H1 (cell line): ENCODE measurements at regions of chr17 and their contacts with region 1.

Region 1: GRCh38 chr17:46940621-46941404 is 17.9 kb downstream of the GOSR2 start:
- DNase-seq: peak; percentile 56 to 89
- H3K4me3 ChIP-seq: no peak overlapping the region
- H3K27ac ChIP-seq: no peak overlapping the region
- H3K4me1 ChIP-seq: peaks cover 6 to 16% (median 9%) of the 10 kb centered on the region in 4 experiments
- H3K27me3 ChIP-seq: no peaks in the 10 kb centered on the region
- CTCF ChIP-seq: peak; percentile 90 to 98 (median 90)
- EP300 ChIP-seq: no peak
- POLR2A ChIP-seq: no peak
- RAD21 ChIP-seq: peak; percentile 93 to 94

Region 2: DNA sequence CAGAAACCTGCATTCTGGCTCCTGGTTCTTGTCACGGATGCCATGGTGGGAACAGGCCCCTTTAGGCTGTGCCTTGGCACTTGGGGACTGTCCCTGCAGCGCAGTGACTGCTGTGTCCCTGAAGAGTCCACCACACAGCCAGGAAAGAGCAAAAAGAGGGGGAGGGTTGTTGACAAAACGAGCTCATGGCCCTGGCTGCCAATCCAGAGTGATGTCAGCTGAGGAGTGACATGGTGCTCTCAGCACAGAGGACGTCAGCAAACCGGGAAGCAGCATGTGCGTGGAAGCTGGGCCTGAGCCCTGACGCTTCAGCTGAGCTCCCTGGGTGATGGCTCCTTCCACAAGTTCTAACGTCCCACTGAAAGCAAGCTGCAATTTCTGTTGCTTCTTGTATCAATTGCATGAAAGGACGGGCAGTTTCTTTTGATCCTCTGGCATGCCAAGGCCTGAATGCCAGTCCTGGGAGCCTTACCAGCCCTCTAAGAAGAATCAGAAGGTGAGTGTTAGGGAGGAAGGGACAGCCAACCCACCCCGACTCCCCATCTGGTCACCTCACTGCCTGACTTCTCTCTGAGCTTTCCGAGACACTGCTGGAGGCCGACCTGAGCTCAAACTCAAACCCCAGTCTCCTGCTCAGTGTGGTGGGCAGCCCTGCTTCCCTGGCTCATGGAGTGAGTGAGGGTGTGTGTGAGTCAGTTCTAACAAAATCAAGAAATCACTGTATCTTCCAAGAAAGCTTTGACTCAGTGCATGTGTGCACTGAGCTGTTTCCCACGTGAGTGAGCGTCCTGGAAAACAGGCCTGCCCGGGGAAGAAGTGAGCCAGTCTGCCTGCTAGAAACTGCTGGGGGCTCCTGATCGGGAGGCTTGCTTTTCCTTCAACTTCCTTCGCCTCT is 107.6 kb before region 1 on chr17:
- CTCF ChIA-PET with region 1: interaction called, 52 read pairs
- POLR2A ChIA-PET with region 1: interaction called, 3 read pairs
- DNase-seq: no peak
- H3K4me3 ChIP-seq: no peak overlapping the region
- H3K27ac ChIP-seq: no peak overlapping the region
- H3K4me1 ChIP-seq: peaks cover 5 to 23% (median 17%) of the 10 kb centered on the region in 4 experiments
- H3K27me3 ChIP-seq: peaks cover 0 to 39% (median 16%) of the 10 kb centered on the region in 4 experiments; a peak in 5 of 7 replicates
- CTCF ChIP-seq: no peak
- EP300 ChIP-seq: no peak
- POLR2A ChIP-seq: no peak
- RAD21 ChIP-seq: no peak

Region 3: DNA sequence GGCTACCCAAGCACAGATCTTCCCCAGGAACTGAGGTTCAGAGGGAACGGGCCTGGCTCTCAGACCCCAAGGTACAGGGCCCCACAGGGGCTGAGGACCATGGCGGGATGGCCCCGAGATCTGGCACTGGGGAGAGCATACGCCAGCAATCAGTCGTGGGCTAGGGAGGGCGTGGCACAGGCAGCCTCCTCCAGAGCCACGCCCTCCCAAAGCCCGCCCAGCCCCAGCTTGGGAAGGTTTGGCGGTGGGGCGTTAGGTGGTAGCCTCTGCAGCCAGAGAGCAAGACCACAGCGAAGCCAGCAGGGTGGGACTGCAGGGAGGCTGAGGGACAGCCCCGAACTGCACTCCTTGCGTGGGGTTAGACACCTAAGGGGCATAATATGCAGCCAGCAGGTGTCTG is 77.9 kb before region 1 on chr17:
- CTCF ChIA-PET with region 1: interaction called, 21 read pairs
- POLR2A ChIA-PET with region 1: no interaction called
- DNase-seq: peak in 1 of 2 experiments; percentile 82
- H3K4me3 ChIP-seq: no peak overlapping the region
- H3K27ac ChIP-seq: no peak overlapping the region
- H3K4me1 ChIP-seq: peaks cover 0 to 8% (median 3%) of the 10 kb centered on the region in 4 experiments; a peak in 5 of 7 replicates
- H3K27me3 ChIP-seq: peaks cover 0 to 5% (median 0%) of the 10 kb centered on the region in 4 experiments; a peak in 2 of 7 replicates
- CTCF ChIP-seq: no peak
- EP300 ChIP-seq: no peak
- POLR2A ChIP-seq: no peak
- RAD21 ChIP-seq: no peak

Region 4: DNA sequence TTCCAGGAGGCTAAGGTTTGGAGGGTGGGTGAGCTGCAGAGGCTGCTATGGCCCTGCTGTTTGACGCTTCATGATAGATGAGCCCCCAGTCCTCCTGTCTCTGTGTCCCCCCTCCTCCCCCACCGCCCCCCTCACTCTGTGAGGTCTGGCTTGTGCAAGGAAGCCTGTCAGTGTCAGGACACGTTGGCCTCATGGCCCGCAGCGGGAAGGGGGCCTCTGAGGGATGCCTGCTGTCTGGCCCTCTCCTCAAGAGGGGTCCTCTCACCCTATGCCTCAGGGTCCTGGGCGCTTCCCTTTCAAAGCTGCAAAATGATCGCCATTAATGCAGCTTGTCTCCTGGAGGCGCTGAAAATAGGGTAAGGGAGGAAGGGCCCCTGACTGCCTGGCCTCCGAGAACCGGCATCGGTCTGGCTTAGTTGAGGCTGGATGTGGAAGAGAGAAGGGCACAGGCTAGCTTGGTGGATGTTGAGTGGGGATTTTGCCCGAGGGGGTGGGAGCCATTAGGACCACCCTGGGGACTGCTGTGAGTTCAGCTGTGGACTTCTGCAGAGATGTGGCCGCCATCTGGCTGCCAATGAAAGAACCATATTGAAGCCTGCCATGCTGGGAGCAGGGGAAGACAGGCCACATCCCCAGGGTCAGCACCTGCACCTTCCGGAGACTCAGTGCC is 32.6 kb before region 1 on chr17:
- CTCF ChIA-PET with region 1: interaction called, 18 read pairs
- POLR2A ChIA-PET with region 1: no interaction called
- DNase-seq: no peak
- H3K4me3 ChIP-seq: no peak overlapping the region
- H3K27ac ChIP-seq: no peak overlapping the region
- H3K4me1 ChIP-seq: peaks cover 0 to 5% (median 2%) of the 10 kb centered on the region in 4 experiments; a peak in 4 of 7 replicates
- H3K27me3 ChIP-seq: no peaks in the 10 kb centered on the region
- CTCF ChIP-seq: no peak
- EP300 ChIP-seq: no peak
- POLR2A ChIP-seq: no peak
- RAD21 ChIP-seq: no peak

Region 5: DNA sequence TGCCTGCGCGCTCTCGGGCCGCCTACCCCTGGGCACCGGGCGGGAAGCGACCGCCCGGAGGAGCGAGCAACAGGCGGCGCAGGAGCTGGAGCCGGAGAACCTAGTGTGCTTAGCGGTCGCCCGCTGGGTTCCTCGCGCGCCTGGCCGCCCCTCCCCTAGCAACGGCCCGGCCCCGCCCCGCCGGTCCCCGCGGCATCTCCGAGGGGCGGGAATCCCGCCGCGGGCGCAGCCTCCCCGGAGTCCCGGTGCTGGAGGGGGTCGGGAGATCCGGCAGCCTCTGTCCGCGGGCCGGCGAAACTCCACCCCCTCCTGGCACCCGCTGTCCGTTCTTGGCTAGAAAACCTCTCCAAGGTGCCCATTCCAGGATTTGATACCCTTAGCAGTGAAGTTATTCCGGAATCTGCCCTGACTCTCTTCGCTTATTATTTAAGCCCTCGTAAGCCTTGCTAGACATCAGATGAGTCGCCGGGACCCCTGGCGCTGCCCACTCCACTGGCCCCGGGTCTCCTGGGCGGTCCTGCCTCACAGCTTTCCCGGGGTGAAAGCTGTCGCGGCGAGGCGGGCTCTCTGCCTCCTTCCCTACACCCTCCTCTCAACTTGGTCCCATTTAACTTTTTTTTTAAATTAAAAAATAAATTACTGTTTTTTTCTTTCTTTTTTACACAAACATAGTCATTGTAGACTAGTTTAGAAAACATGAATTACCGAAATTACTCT is 38.5 kb after region 1 on chr17 and contains the start of gene RPRML:
- CTCF ChIA-PET with region 1: interaction called, 51 read pairs
- POLR2A ChIA-PET with region 1: interaction called, 24 read pairs
- DNase-seq: peak in 1 of 2 experiments; percentile 77
- H3K4me3 ChIP-seq: peak within 1 kb of the TSS; percentile 53 to 70 (median 65)
- H3K27ac ChIP-seq: no peak within 1 kb of the TSS
- H3K4me1 ChIP-seq: peaks cover 8 to 18% (median 13%) of the 10 kb centered on the region in 4 experiments
- H3K27me3 ChIP-seq: peaks cover 8 to 21% (median 21%) of the 10 kb centered on the region in 4 experiments
- CTCF ChIP-seq: no peak
- EP300 ChIP-seq: no peak
- POLR2A ChIP-seq: no peak
- RAD21 ChIP-seq: no peak
- total RNA-seq, gene RPRML: 5.5 and 7.2 TPM in 2 replicates

Region 6: GRCh38 chr17:47009759-47010594 is 69.2 kb after region 1 on chr17:
- CTCF ChIA-PET with region 1: interaction called, 28 read pairs
- POLR2A ChIA-PET with region 1: interaction called, 7 read pairs
- DNase-seq: no peak
- H3K4me3 ChIP-seq: no peak overlapping the region
- H3K27ac ChIP-seq: no peak overlapping the region
- H3K4me1 ChIP-seq: no peaks in the 10 kb centered on the region
- H3K27me3 ChIP-seq: no peaks in the 10 kb centered on the region
- CTCF ChIP-seq: no peak
- EP300 ChIP-seq: no peak
- POLR2A ChIP-seq: no peak
- RAD21 ChIP-seq: no peak

Region 7: DNA sequence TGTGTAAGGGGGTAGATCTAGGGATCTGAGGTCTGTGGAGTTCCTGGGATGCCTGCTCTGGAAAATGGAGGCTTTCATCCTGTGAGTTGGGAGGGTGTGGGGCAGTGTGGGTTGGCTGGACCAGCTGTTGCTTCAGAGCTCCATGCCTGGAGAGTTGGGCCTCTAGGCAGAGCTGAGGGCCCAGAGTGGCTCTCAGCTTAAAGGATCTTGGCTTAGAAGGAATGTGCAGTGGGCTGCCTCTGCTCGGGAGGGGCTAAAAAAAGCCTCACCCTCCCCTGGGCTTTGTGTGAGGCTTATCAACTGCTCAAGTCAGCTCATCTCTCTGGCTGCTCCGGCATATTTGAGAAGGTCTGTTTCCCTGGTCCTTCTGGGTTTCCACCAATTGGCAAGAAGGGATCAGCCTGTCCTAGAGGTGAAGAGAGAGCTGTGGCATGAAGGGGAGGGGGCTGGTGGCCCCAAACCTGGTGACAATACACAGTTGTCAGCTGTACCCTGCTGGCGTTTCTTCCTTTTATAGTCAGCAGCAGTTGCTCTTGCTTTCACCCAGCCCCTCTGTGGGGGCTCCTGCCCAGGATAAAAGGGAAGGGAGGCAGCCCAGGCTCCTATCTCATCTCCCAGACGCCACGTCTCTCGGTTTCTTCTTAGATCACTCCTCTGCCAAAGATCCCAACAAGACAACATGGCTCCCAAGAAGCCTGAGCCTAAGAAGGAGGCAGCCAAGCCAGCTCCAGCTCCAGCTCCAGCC is 268.1 kb after region 1 on chr17 and contains the start of gene MYL4:
- CTCF ChIA-PET with region 1: no interaction called
- POLR2A ChIA-PET with region 1: no interaction called
- DNase-seq: no peak
- H3K4me3 ChIP-seq: no peak within 1 kb of the TSS
- H3K27ac ChIP-seq: no peak within 1 kb of the TSS
- H3K4me1 ChIP-seq: peaks cover 0 to 3% (median 1%) of the 10 kb centered on the region in 4 experiments; a peak in 2 of 7 replicates
- H3K27me3 ChIP-seq: peaks cover 0 to under 1% (median 0%) of the 10 kb centered on the region in 4 experiments; a peak in 2 of 7 replicates
- CTCF ChIP-seq: no peak
- EP300 ChIP-seq: no peak
- POLR2A ChIP-seq: no peak
- RAD21 ChIP-seq: no peak
- total RNA-seq, gene MYL4: not detected in 2 replicates